ENCODE measurements at regions of chr14 and their contacts with region 1.

Region 1: GRCh38 chr14:105760691-105761346 is 234.4 kb downstream of the TMEM121 start:
- DNase-seq: no peak
- CTCF ChIP-seq: no peak

Region 2: DNA sequence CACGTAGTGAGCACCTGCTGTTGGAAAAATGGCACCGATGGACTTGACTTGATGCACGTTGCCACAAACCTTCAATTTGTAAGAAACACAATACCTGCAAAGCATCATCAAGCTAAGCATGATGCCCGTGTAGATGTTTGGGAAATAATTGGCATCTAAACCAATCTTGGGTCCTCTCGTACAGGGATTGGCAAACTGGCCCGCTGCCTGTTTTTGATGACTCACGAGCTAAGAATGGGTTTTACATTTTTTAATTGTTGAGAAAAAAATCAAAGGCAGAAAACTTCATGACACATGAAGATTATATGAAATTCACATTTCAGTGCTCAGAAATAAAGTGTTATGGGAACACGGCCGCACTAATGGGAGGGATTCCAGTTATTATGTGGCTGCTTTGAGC is 330.3 kb before region 1 on chr14:
- in situ Hi-C with region 1: no loop called
- DNase-seq: no peak
- CTCF ChIP-seq: no peak

Region 3: GRCh38 chr14:105617201-105617777 is 143.5 kb before region 1 on chr14:
- in situ Hi-C with region 1: loop called (anchors 5 kb)
- DNase-seq: peak; percentile 50
- CTCF ChIP-seq: no peak

Measured in GM13977 (cell line).